Motor neuron (in vitro differentiated cells): ENCODE measurements at regions of chr6 and their contacts with region 1.

Region 1: GRCh38 chr6:123802697-123803496 is 768 bp upstream of the NKAIN2 start:
- ATAC-seq: peak; percentile 72 to 96 (median 78)
- H3K4me3 ChIP-seq: peak overlapping the region; percentile 50 to 97 (median 79)
- H3K27ac ChIP-seq: peak overlapping the region; percentile 12 to 31
- H3K4me1 ChIP-seq: peaks cover 4% of the 10 kb centered on the region in 2 donors

Region 2: DNA sequence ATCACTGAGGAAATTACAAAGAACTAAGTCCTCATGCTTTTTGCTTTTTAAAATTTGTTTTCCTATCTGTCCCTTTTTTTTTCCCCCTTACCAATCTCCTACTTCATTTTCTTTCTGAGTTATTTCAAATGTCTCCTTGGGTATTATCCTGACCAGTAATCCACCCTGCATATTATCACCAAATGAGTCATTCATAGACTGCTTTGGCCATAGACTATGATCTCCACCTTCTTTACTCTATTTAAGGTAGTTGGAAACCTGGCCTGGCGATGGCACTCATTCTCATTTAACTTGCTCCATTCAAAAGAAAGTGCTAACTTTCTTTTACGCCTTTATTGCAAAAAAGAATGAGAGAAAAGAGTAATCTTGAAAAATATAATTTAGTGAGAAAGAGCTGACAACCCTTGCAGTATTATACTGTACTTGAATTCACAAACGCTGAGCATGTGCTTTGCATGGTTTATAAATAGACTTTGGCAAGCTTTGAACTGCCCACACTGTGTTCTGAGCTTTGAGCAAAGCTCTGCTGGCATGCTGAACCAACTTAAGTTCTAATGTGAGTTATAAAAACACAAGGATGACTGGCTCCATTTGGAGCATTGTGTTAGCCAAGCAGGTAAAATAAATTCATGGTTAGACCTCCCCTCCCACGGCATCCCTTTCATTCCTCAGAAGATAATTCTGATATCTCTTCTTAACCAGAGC is 199.6 kb after region 1 on chr6:
- in situ Hi-C with region 1: loop called in 1 of 9 experiments (anchors 25 kb)
- ATAC-seq: peak in 2 of 8 experiments; percentile 37 to 42
- H3K4me3 ChIP-seq: no peak overlapping the region
- H3K27ac ChIP-seq: no peak overlapping the region
- H3K4me1 ChIP-seq: no peaks in the 10 kb centered on the region

Region 3: GRCh38 chr6:124054034-124054433 is 251.1 kb after region 1 on chr6:
- in situ Hi-C with region 1: no loop called
- ATAC-seq: no peak
- H3K4me3 ChIP-seq: no peak overlapping the region
- H3K27ac ChIP-seq: no peak overlapping the region
- H3K4me1 ChIP-seq: peaks cover 0 to 25% of the 10 kb centered on the region in 2 donors

Region 4: GRCh38 chr6:124825564-124825963 is 1022.7 kb after region 1 on chr6:
- in situ Hi-C with region 1: loop called in 2 of 9 experiments (anchors 25 kb)
- ATAC-seq: peak in 7 of 8 experiments; percentile 76 to 93 (median 85)
- H3K4me3 ChIP-seq: no peak overlapping the region
- H3K27ac ChIP-seq: no peak overlapping the region
- H3K4me1 ChIP-seq: peaks cover 12 to 16% of the 10 kb centered on the region in 2 donors